Mammary epithelial cell (primary cell): ENCODE measurements at regions of chr22 and their contacts with region 1.

Region 1: DNA sequence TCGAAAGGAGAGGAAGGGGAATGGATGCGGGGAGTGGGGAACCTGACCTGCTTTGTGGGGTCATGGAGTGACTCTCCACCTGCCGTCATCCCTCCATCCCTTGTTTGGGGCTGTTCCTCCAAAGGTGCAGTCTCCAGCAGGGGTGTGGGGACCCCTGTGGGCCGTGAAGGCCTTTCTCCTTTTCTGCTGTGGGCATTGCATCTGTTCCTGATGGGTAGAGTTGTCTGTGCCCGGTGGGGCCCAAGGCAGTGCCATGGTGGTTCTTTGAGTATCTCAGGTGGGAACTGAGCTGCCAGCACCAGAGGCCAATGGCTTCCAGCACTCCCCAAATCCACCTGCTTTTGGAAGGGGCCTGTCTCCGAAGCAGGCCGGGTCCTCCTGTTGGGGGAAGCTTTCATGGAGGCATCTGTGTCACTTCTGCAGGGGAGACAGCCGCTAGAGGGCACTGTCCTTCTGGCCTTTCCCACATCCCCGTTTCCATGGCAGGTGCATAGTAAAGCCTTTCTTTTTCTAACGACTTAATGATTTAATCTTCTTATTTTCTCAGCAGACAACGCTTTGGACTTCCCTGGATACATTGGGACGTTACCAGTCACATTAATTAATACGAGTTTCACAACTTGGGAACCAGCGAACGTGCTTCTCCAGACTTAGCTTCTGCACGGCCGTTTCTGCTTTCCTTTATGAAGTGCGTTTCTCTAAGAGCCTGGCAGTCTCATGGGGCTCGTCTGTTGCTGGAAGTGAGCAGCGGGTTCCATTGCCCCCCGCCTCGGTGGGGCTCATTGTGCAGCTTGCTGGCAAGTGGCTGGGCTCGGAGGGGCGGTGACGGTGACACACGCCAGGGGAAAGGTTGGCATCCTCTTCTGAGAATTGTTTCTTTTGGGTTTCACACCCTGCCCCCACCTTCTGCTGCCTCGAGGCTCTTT is 57.1 kb downstream of the PARVB start:
- DNase-seq: peak; percentile 26
- H3K4me3 ChIP-seq: no peak overlapping the region
- H3K27ac ChIP-seq: no peak overlapping the region
- H3K4me1 ChIP-seq: no peaks in the 10 kb centered on the region
- H3K27me3 ChIP-seq: no peaks in the 10 kb centered on the region
- CTCF ChIP-seq: peak; percentile 75 to 95

Region 2: GRCh38 chr22:43884600-43885325 is 196.4 kb before region 1 on chr22:
- CTCF ChIA-PET with region 1: interaction called, 6 read pairs
- dilution Hi-C with region 1: no loop called
- in situ Hi-C with region 1: no loop called
- intact Hi-C with region 1: loop called (anchors 5 kb)
- DNase-seq: peak; percentile 23
- H3K4me3 ChIP-seq: no peak overlapping the region
- H3K27ac ChIP-seq: no peak overlapping the region
- H3K4me1 ChIP-seq: no peaks in the 10 kb centered on the region
- H3K27me3 ChIP-seq: no peaks in the 10 kb centered on the region
- CTCF ChIP-seq: peak; percentile 76 to 89

Region 3: DNA sequence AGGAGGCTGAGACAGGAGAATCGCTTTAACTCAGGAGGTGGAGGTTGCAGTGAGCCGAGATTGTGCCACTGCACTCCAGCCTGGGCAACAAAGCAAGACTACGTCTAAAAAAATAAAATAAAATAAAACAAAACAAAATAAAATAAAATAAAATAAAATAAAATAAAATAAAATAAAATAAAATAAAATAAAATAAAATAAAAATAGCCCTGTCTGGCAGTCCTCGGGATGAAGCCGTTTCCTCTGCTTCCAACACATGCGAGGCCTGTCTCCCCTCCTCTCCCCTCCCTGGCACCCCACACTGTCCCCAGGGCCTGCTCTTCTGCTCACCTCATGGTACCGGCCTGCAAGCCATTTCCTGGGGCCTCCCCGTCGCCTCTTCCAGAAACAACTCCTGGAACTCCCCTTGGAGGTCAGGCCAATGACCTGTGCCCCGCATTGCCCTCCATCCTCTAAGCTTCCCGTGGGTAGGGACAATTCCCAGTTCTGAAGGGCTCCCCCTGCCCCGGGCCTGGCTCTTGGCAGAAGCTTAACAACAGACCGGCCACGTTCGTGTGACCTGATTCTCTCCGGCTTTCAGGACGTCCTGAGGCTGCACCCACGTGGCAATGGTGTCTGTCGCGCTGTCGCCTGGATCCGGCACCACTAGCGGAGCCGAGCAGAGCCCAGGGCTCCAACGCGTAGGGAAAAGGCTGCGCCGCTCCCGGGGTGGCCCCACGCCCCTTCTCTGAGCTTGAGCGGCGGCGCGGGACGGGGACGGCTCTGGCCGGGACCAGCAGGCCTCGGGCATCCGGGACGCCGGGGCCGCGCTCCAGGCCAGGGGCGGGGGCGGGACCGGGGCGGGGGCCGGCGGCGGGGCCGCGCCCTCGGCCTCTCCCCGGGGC is 57.6 kb before region 1 on chr22:
- CTCF ChIA-PET with region 1: interaction called, 3 read pairs
- dilution Hi-C with region 1: loop called (anchors 5 kb)
- in situ Hi-C with region 1: no loop called
- intact Hi-C with region 1: no loop called
- DNase-seq: peak; percentile 11
- H3K4me3 ChIP-seq: peak overlapping the region; percentile 59 to 71 (median 60)
- H3K27ac ChIP-seq: no peak overlapping the region
- H3K4me1 ChIP-seq: peaks cover 9% of the 10 kb centered on the region
- H3K27me3 ChIP-seq: no peaks in the 10 kb centered on the region
- CTCF ChIP-seq: no peak

Region 4: GRCh38 chr22:44042249-44043218 is 38.7 kb before region 1 on chr22:
- CTCF ChIA-PET with region 1: no interaction called
- dilution Hi-C with region 1: no loop called
- in situ Hi-C with region 1: no loop called
- intact Hi-C with region 1: no loop called
- DNase-seq: no peak
- H3K4me3 ChIP-seq: no peak overlapping the region
- H3K27ac ChIP-seq: no peak overlapping the region
- H3K4me1 ChIP-seq: peaks cover 8% of the 10 kb centered on the region
- H3K27me3 ChIP-seq: no peaks in the 10 kb centered on the region
- CTCF ChIP-seq: no peak

Region 5: GRCh38 chr22:44098083-44098739 is 17.0 kb after region 1 on chr22:
- CTCF ChIA-PET with region 1: no interaction called
- dilution Hi-C with region 1: no loop called
- in situ Hi-C with region 1: no loop called
- intact Hi-C with region 1: no loop called
- DNase-seq: no peak
- H3K4me3 ChIP-seq: no peak overlapping the region
- H3K27ac ChIP-seq: no peak overlapping the region
- H3K4me1 ChIP-seq: no peaks in the 10 kb centered on the region
- H3K27me3 ChIP-seq: no peaks in the 10 kb centered on the region
- CTCF ChIP-seq: no peak

Region 6: DNA sequence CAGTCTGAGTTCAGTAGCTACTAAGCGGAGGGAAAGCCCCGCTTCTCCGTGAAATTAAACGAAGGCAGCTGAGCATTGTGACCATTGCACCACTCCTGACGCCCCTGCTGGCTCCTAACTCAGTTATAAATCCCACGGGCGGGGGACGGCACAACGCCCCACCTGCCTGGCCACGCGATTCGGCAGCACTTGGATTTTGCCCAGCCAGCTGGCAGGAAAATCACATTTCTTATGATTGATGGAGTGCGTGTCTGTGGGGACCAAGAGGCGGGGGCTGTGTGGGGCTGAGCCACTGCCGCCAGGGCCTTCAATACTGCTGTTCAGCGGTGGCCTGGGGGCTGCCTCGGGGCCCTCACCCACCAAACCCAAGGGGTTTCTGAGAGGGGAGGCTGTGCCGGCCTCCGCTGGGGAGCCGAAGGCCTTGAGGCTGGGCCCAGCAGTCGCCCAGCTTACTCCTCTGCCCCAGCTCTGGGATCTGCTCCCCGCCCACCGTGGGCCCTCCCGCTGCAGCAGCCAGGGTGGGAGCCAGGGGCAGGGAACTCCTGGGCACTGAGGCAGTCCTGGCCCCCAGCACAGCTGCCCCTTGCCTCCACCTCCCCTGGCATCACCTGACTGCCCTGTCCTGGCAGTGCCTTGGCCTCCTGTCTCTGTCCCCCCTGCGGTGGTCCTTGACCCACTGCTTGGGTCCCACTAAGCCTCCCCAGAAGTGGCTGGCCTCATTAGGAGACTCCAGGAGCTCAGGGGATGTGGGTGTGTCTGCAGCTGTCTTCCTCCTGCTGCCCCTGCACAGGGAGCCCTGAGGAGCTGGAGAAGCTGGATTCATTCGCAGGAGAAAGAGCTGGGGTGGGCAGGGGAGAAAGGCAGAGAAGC is 200.8 kb after region 1 on chr22:
- CTCF ChIA-PET with region 1: no interaction called
- dilution Hi-C with region 1: loop called (anchors 5 kb)
- in situ Hi-C with region 1: no loop called
- intact Hi-C with region 1: no loop called
- DNase-seq: no peak
- H3K4me3 ChIP-seq: no peak overlapping the region
- H3K27ac ChIP-seq: no peak overlapping the region
- H3K4me1 ChIP-seq: peaks cover 5% of the 10 kb centered on the region
- H3K27me3 ChIP-seq: no peaks in the 10 kb centered on the region
- CTCF ChIP-seq: no peak

Region 7: GRCh38 chr22:44567846-44568493 is 486.8 kb after region 1 on chr22:
- CTCF ChIA-PET with region 1: no interaction called
- dilution Hi-C with region 1: no loop called
- in situ Hi-C with region 1: no loop called
- intact Hi-C with region 1: loop called (anchors 2 kb)
- DNase-seq: peak; percentile 17
- H3K4me3 ChIP-seq: no peak overlapping the region
- H3K27ac ChIP-seq: no peak overlapping the region
- H3K4me1 ChIP-seq: peaks cover 8% of the 10 kb centered on the region
- H3K27me3 ChIP-seq: no peaks in the 10 kb centered on the region
- CTCF ChIP-seq: peak; percentile 48 to 66

Region 8: DNA sequence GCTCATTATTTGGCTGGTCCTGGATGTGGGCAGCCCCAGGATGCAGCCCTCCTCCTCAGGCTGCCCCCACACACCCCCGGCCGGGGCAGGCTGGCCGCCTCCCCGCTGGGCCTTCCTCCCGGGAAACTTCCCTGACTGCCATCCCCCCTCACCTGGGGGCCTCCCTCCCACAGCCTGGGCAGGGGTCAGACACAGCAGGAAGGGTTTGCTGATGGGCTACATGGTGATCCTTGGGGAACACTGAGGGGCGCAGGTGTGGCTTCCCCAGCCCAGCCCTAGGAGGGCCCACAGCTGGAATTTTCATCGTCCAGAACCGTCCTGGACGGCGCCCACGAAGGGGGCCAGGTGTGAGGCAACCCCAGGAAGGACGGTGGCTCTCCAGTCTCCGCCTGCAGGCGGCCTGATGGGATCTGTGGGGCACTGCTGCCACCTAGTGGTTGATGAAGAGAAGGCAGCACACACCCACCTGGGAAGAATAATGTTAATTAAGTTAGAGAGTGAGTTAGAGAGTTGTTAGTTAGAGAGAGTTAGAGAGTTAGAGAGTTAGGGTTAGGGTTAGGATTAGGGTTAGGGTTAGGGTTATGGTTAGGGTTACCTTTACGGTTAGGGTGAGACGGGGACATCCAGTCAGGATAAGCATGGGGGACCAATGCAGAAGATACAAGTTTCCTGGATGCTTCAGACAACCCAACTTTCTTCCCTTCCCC is 544.9 kb after region 1 on chr22:
- CTCF ChIA-PET with region 1: interaction called, 4 read pairs
- dilution Hi-C with region 1: no loop called
- in situ Hi-C with region 1: loop called (anchors 5 kb)
- intact Hi-C with region 1: loop called (anchors 1 kb)
- DNase-seq: peak; percentile 35
- H3K4me3 ChIP-seq: no peak overlapping the region
- H3K27ac ChIP-seq: no peak overlapping the region
- H3K4me1 ChIP-seq: no peaks in the 10 kb centered on the region
- H3K27me3 ChIP-seq: peaks cover 2% of the 10 kb centered on the region
- CTCF ChIP-seq: peak; percentile 90 to 93